Head of caudate nucleus (tissue), 42 donors: ENCODE measurements at regions of chr2 and their contacts with region 1.

Region 1: GRCh38 chr2:6080932-6081753 is 389.0 kb downstream of the SOX11 start:
- DNase-seq: peak in 41 of 42 donors; percentile 5 to 83 (median 50)

Region 2: GRCh38 chr2:5932556-5933469 is 148.3 kb before region 1 on chr2:
- intact Hi-C with region 1: loop called (anchors 10 kb)
- DNase-seq: peak; percentile 78 to 96 (median 89)

Region 3: DNA sequence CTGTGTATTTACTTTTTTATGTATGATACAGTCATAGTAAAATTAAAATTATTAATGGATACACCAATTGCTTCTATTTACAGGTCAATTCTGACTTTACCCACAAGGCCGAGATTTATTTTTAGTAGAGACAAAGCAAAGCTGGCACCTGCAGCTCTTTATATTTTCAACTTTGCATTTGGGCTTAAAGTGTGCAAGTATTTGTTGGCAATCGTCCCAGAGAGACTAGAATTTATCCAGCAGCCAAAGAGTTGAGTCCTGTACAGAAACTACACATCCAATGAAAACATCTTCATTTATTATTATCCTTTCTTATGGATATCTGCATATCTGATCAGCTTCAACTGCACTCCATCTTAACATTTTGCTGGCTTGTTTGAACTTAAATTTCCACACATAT is 96.7 kb after region 1 on chr2:
- intact Hi-C with region 1: no loop called
- DNase-seq: no peak